H1 (cell line): ENCODE measurements at regions of chr3 and their contacts with region 1.

Region 1: DNA sequence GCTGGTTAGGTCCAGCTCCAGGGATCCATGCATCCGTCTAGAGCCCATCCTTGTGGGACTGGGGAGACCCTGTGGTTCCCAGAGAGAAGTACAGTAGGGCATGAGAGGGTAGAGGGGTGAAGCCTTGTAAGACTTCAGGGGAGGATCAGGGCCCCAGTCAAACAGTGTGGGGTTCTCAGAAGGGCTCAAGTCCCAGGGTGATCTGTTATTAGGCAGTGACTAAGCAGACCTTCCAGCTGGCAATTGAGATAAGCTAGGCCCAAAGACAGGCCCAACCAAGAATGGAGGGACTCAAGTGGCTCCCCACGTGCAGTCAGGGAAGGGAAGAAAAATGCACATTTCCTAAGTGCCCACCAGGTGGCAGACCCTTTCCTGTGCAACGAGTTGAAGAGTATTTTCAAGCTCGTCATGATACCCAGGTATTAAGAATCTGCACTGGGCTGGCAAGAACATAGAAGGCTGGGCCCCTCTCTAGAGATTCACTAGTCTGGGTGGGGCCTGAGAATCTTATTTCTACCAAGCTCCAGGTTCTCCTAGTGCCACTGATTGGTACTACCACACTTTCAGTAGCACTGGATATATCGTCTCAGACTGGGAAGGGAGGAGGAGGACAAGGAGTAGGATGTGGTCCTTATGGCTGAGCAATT is 240.8 kb downstream of the NR1D2 start:
- DNase-seq: peak; percentile 9 to 65
- H3K4me3 ChIP-seq: no peak overlapping the region
- H3K27ac ChIP-seq: no peak overlapping the region
- H3K4me1 ChIP-seq: no peaks in the 10 kb centered on the region
- H3K27me3 ChIP-seq: no peaks in the 10 kb centered on the region
- CTCF ChIP-seq: peak; percentile 63 to 79 (median 64)
- EP300 ChIP-seq: no peak
- POLR2A ChIP-seq: no peak
- RAD21 ChIP-seq: peak; percentile 65 to 74

Region 2: GRCh38 chr3:24168977-24169376 is 16.9 kb before region 1 on chr3:
- CTCF ChIA-PET with region 1: interaction called, 38 read pairs
- POLR2A ChIA-PET with region 1: interaction called, 4 read pairs
- DNase-seq: no peak
- H3K4me3 ChIP-seq: no peak overlapping the region
- H3K27ac ChIP-seq: no peak overlapping the region
- H3K4me1 ChIP-seq: peaks cover 0 to 12% (median 7%) of the 10 kb centered on the region in 4 experiments; a peak in 2 of 7 replicates
- H3K27me3 ChIP-seq: no peaks in the 10 kb centered on the region
- CTCF ChIP-seq: no peak
- EP300 ChIP-seq: no peak
- POLR2A ChIP-seq: no peak
- RAD21 ChIP-seq: no peak

Region 3: DNA sequence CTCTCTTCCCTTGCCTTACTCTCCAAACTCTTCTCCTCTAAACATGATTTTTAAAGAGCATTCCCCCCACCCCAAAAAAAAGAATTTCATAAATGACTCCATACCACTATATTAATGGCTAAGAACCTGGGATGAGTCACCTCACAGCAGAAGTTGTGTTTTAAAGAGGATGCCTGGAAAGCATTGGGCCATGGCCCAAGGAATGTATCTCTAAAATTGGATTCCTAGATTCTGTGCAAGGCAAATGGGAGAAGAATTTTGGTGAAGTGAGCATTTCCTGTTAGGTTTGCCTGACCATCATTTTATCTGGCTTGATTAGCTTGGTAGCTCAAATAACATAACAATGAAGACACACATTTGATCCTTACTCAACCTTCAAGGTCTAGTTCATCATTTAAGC is 10.7 kb after region 1 on chr3:
- CTCF ChIA-PET with region 1: interaction called, 25 read pairs
- POLR2A ChIA-PET with region 1: no interaction called
- DNase-seq: no peak
- H3K4me3 ChIP-seq: no peak overlapping the region
- H3K27ac ChIP-seq: no peak overlapping the region
- H3K4me1 ChIP-seq: no peaks in the 10 kb centered on the region
- H3K27me3 ChIP-seq: no peaks in the 10 kb centered on the region
- CTCF ChIP-seq: no peak
- EP300 ChIP-seq: no peak
- POLR2A ChIP-seq: no peak
- RAD21 ChIP-seq: no peak

Region 4: DNA sequence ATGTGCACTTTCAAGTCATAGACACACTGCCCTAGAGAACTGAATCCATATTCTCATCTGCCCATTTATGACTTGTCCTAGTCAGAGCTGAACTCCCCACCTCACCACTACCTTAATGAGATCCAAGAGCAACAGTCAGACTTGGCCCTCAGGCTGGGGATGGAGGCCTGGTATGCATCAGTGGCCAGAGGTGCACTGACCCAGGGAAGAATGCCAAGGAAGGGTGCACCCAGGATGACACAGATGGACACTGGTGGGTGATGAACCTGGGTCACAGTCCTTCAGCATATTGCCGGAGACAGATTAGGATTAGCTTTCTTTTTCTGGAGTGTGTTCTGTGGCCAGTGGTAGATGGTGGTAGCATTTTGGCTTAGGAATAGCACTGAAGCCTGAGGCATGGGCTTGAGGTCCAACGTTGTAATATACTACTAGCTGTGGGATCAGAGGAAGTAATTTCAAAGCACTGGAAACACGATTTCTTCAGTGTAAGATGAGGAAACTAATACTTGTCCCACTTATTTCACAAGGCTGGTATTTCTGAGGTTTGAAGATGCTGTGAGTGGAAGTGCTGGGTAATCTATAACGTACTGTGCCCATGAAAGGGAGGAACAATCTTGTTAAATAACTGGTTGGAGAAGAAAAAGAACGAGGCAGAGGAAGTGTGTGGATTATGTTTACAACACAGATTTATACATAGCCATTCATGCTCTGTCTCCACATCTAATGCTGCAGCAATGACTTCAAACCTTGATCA is 43.8 kb after region 1 on chr3:
- CTCF ChIA-PET with region 1: interaction called, 27 read pairs
- POLR2A ChIA-PET with region 1: no interaction called
- DNase-seq: no peak
- H3K4me3 ChIP-seq: no peak overlapping the region
- H3K27ac ChIP-seq: no peak overlapping the region
- H3K4me1 ChIP-seq: peaks cover 0 to 4% (median 0%) of the 10 kb centered on the region in 4 experiments; a peak in 1 of 7 replicates
- H3K27me3 ChIP-seq: no peaks in the 10 kb centered on the region
- CTCF ChIP-seq: no peak
- EP300 ChIP-seq: no peak
- POLR2A ChIP-seq: no peak
- RAD21 ChIP-seq: no peak

Region 5: GRCh38 chr3:24428481-24428880 is 242.6 kb after region 1 on chr3:
- CTCF ChIA-PET with region 1: no interaction called
- POLR2A ChIA-PET with region 1: no interaction called
- DNase-seq: no peak
- H3K4me3 ChIP-seq: no peak overlapping the region
- H3K27ac ChIP-seq: no peak overlapping the region
- H3K4me1 ChIP-seq: no peaks in the 10 kb centered on the region
- H3K27me3 ChIP-seq: no peaks in the 10 kb centered on the region
- CTCF ChIP-seq: no peak
- EP300 ChIP-seq: no peak
- POLR2A ChIP-seq: no peak
- RAD21 ChIP-seq: no peak

Region 6: DNA sequence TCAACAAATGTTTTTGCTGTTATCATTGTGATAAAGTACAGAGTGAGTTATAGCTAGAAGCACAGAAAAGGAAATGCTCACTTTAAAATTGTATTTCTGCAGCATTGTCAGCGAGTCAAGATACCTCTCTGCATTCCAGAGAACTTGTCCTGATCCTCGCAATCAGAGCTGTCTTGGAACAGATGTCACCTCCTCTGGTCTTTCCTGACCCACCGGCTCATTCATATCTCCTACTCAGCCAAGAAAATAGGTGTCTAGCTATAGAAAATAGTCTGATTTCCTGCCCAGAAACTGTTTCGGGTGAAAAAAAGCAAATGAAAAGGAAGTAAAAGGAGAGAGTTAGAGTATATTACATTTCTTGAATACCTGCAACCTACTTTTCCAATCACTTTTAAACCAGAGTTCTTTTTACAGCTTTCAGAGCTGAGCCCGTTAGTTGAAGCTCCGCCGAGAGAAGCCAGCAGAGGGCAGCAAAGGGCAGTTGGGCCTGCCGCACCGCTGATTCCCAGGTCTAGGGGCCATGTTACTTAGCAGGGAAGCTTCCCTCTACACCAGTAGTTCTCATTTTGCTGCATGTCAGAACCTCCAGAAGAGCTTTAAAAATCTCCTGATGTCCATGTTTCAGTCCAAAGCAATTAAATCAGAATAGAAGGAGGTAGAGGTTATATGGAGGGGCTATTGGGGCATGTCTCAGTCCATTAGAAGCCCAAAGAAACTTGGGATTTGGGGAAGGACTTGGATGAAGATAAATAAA is 494.5 kb after region 1 on chr3:
- CTCF ChIA-PET with region 1: interaction called, 14 read pairs
- POLR2A ChIA-PET with region 1: no interaction called
- DNase-seq: peak in 1 of 2 experiments; percentile 96
- H3K4me3 ChIP-seq: no peak overlapping the region
- H3K27ac ChIP-seq: no peak overlapping the region
- H3K4me1 ChIP-seq: peaks cover 0 to 7% (median 3%) of the 10 kb centered on the region in 4 experiments; a peak in 4 of 7 replicates
- H3K27me3 ChIP-seq: no peaks in the 10 kb centered on the region
- CTCF ChIP-seq: peak; percentile 85 to 87 (median 87)
- EP300 ChIP-seq: no peak
- POLR2A ChIP-seq: no peak
- RAD21 ChIP-seq: peak; percentile 80 to 87